ENCODE measurements at regions of chr3 and their contacts with region 1.

Region 1: GRCh38 chr3:27134165-27134796 is 234.9 kb downstream of the NEK10 start:
- DNase-seq: peak; percentile 76
- H3K4me3 ChIP-seq: no peak overlapping the region
- H3K27ac ChIP-seq: peak overlapping the region in 2 of 4 donors; percentile 1 to 40
- H3K4me1 ChIP-seq: peaks cover 0 to 9% (median 8%) of the 10 kb centered on the region in 4 donors
- H3K27me3 ChIP-seq: no peaks in the 10 kb centered on the region
- CTCF ChIP-seq: peak; percentile 41 to 87 (median 82)
- EP300 ChIP-seq: no peak
- POLR2A ChIP-seq: no peak

Region 2: GRCh38 chr3:27279123-27279522 is 144.8 kb after region 1 on chr3:
- intact Hi-C with region 1: loop called (anchors 10 kb)
- DNase-seq: no peak
- H3K4me3 ChIP-seq: no peak overlapping the region
- H3K27ac ChIP-seq: no peak overlapping the region
- H3K4me1 ChIP-seq: no peaks in the 10 kb centered on the region
- H3K27me3 ChIP-seq: no peaks in the 10 kb centered on the region
- CTCF ChIP-seq: peak in 1 of 4 experiments; percentile 12
- EP300 ChIP-seq: no peak
- POLR2A ChIP-seq: no peak

Region 3: DNA sequence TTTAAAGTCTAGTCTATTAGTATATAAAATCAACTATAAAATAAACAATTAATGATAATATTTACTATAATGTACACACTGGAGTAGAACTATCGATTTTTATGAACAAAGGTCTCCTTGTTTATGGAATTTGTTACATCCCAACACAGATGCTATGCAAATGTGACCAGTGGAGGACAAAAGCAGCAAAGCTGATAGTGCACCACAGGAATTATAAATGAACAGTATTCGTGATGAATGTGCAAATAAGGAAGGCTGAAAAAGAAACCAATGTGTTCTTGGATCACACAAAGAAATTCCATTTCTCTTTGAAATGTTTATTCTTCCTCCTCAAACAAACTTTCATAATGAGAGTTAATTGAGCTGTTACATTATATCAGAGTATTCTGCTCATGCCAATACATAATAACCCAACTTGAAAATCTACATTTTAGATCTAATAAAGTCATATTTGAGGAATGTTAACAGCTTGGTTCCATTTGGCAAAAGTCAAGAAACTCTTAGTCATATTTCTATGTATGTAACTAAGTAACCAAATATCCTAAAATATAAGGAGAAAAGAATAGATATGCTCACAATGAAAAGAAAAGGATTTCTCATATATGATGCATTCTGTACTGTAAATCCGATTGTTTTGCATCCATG is 155.6 kb after region 1 on chr3:
- intact Hi-C with region 1: no loop called
- DNase-seq: no peak
- H3K4me3 ChIP-seq: no peak overlapping the region
- H3K27ac ChIP-seq: no peak overlapping the region
- H3K4me1 ChIP-seq: peaks cover 0 to 20% (median 8%) of the 10 kb centered on the region in 4 donors
- H3K27me3 ChIP-seq: no peaks in the 10 kb centered on the region
- CTCF ChIP-seq: no peak
- EP300 ChIP-seq: no peak
- POLR2A ChIP-seq: no peak

Region 4: GRCh38 chr3:27467545-27467944 is 333.3 kb after region 1 on chr3:
- intact Hi-C with region 1: loop called (anchors 5 kb)
- DNase-seq: no peak
- H3K4me3 ChIP-seq: no peak overlapping the region
- H3K27ac ChIP-seq: peak overlapping the region in 3 of 4 donors; percentile 56 to 64 (median 61)
- H3K4me1 ChIP-seq: peaks cover 0 to 30% (median 22%) of the 10 kb centered on the region in 4 donors
- H3K27me3 ChIP-seq: no peaks in the 10 kb centered on the region
- CTCF ChIP-seq: peak; percentile 41 to 57 (median 50)
- EP300 ChIP-seq: no peak
- POLR2A ChIP-seq: no peak

Region 5: DNA sequence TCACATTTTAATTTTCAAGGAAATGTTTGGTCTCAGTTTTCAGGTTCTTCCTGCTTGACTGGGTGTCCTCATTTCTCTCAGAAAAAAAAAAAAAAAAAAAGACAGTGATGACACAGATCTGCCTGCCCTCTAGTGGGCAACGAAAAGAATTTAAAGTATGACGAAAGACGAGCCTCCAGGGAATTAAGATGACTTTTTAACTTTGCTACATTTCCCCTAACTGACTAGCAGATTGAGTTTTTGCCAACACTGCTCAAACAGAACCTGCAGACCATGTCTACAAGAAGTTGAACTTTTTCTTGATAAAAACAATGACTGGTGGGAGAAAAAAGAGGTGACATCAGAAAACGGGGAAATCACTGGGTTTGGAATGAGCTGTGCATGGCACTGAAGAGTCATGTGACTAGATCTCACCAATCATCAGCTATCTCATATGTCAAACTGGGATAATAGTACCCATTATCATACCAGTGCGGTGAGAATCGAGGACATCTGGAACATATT is 547.0 kb after region 1 on chr3:
- intact Hi-C with region 1: loop called (anchors 2 kb)
- DNase-seq: no peak
- H3K4me3 ChIP-seq: peak overlapping the region in 3 of 4 donors; percentile 16 to 21 (median 17)
- H3K27ac ChIP-seq: peak overlapping the region in 3 of 4 donors; percentile 10 to 50 (median 47)
- H3K4me1 ChIP-seq: peaks cover 0 to 19% (median 15%) of the 10 kb centered on the region in 4 donors
- H3K27me3 ChIP-seq: no peaks in the 10 kb centered on the region
- CTCF ChIP-seq: peak; percentile 37 to 63 (median 54)
- EP300 ChIP-seq: peak in 1 of 4 donors; percentile 25
- POLR2A ChIP-seq: no peak

Region 6: GRCh38 chr3:27813255-27813654 is 679.0 kb after region 1 on chr3:
- intact Hi-C with region 1: no loop called
- DNase-seq: no peak
- H3K4me3 ChIP-seq: no peak overlapping the region
- H3K27ac ChIP-seq: no peak overlapping the region
- H3K4me1 ChIP-seq: no peaks in the 10 kb centered on the region
- H3K27me3 ChIP-seq: no peaks in the 10 kb centered on the region
- CTCF ChIP-seq: no peak
- EP300 ChIP-seq: no peak
- POLR2A ChIP-seq: no peak

Region 7: DNA sequence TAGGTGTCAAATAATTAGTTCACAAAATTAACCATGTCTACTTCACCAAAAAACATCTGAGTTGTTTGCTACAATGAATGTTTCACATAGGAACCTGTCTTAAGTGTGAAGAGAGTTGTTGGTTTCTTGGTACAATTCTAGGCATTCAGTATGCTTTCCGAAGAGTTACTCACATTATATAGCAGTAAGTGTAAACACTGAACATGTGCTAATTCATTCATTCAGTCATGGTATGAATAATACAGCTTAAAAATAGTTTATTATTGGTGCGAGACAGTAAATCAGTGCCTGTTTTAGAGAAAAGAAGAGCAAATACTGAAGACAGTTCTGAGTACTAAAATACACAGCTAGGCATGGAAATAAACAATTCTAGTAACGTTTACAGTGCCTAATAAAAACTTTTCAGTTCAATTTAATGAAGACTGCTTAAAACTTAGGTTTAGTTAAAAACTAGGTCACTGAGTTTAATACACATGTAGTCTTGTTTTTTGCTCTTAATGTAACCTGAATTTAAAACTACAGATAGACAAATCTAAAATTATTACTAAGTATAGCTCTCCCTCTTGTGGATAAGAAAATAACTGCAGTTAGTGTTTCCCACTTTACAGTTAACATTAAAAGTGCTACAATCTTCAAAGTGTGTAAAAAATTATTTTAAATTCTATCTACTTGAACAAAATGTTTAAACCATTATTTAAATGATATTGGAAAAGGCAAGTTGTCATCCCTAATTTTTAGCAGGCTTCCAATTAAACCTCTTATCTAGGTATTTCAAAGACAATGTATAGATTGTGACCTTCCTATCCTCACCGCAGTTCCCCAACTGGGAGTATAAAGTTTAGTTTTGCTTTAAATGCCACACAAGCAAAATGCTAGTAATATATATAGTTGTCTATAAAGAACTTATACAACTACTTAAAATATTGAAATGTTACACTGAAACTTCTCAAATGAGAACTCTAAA is 1194.2 kb after region 1 on chr3:
- intact Hi-C with region 1: loop called (anchors 10 kb)
- DNase-seq: no peak
- H3K4me3 ChIP-seq: no peak overlapping the region
- H3K27ac ChIP-seq: no peak overlapping the region
- H3K4me1 ChIP-seq: peaks cover 0 to 4% (median 0%) of the 10 kb centered on the region in 4 donors
- H3K27me3 ChIP-seq: no peaks in the 10 kb centered on the region
- CTCF ChIP-seq: peak; percentile 32 to 72 (median 52)
- EP300 ChIP-seq: no peak
- POLR2A ChIP-seq: no peak

Measured in sigmoid colon (tissue), 7 donors.